Activated naive CD4-positive, alpha-beta T cell treated with anti-CD3 and anti-CD28 coated beads for 36 hours (primary cell): ENCODE measurements at regions of chr5 and their contacts with region 1.

Region 1: DNA sequence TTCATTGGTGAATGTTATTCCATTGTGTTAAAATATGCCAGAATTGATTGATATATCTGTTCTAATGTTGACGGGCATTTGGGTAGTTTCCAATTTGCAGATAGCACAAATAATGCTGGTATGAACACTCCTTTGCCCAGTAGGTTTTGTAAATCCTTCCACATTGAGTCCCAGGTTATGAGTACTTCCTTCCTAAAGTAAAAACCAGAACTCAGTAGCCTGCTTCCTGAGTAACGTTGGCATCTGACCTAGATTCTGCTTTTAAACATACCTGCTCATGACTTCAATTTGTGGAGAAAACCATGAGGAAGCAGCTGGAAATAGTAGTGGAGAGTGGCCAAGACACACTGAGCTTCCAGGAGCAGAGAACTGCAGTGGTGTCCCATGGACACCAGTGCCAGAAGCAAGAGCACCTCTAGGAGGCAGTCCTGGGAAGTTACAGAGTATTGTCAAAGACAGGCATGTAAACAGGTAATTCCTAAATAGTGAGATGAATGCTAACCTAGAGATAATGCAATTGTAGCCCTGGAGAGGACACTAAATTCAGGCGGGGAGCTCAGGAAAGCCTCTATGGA is 24.3 kb upstream of the RASGRF2 start:
- DNase-seq: peak; percentile 20
- H3K4me3 Mint-ChIP-seq: no peak overlapping the region
- H3K27ac Mint-ChIP-seq: no peak overlapping the region
- H3K4me1 Mint-ChIP-seq: peaks cover 4% of the 10 kb centered on the region
- H3K27me3 Mint-ChIP-seq: no peaks in the 10 kb centered on the region

Region 2: GRCh38 chr5:80686757-80687156 is 249.1 kb before region 1 on chr5:
- CTCF ChIA-PET with region 1: no interaction called
- intact Hi-C with region 1: loop called (anchors 5 kb)
- DNase-seq: no peak
- H3K4me3 Mint-ChIP-seq: no peak overlapping the region
- H3K27ac Mint-ChIP-seq: no peak overlapping the region
- H3K4me1 Mint-ChIP-seq: peaks cover 11% of the 10 kb centered on the region
- H3K27me3 Mint-ChIP-seq: no peaks in the 10 kb centered on the region

Region 3: DNA sequence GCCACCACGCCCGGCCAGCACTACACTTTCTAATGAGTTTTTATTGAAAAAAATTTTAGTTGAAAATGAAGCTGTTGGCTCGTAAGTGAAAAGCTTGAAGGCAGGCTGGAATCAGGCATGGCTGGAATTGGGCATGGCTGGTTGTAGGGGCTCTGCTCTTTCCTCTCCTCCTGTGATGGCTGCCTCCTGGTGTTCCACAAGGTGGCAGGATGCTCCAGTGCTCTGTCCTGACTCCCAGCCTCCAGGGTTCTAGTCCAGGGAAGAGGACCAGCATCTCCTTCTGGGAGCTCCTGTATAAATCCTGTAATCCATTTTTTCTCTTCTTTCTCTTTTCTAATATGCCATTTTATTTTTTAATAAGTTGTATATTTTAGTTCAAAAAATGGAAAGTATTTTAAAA is 224.0 kb before region 1 on chr5:
- CTCF ChIA-PET with region 1: no interaction called
- intact Hi-C with region 1: loop called (anchors 5 kb)
- DNase-seq: peak; percentile 33
- H3K4me3 Mint-ChIP-seq: no peak overlapping the region
- H3K27ac Mint-ChIP-seq: no peak overlapping the region
- H3K4me1 Mint-ChIP-seq: peaks cover 6% of the 10 kb centered on the region
- H3K27me3 Mint-ChIP-seq: no peaks in the 10 kb centered on the region